ENCODE measurements at regions of chr5 and their contacts with region 1.

Region 1: DNA sequence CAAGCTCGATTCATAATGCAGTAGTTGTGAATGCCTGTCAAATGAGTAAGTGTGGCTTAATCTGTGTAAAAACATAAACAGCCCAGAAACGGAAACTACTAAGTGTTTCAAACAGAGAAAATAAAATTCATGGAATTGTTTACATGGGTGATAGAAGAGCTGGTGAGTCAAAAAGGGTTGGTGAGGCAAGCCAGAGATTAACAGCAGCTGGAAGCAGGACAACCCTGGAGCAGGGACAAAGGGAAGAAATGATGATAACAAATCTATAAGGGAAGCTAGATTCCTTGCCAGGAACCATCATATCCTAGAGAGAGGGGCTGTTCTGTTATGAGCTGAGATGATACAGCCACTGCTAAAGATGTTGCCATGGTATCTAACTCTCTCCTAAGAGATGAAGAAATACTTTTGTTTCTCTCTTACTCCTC is 18.0 kb upstream of the PRR16 start:
- DNase-seq: no peak
- H3K4me3 ChIP-seq: no peak overlapping the region
- H3K27ac ChIP-seq: peak overlapping the region; percentile 48 to 74
- H3K4me1 ChIP-seq: peaks cover 4 to 10% of the 10 kb centered on the region in 2 donors
- H3K27me3 ChIP-seq: no peaks in the 10 kb centered on the region
- CTCF ChIP-seq: no peak

Region 2: GRCh38 chr5:120388016-120388781 is 57.9 kb before region 1 on chr5:
- intact Hi-C with region 1: loop called (anchors 5 kb)
- DNase-seq: no peak
- H3K4me3 ChIP-seq: no peak overlapping the region
- H3K27ac ChIP-seq: peak overlapping the region; percentile 68 to 82
- H3K4me1 ChIP-seq: peaks cover 3 to 12% of the 10 kb centered on the region in 2 donors
- H3K27me3 ChIP-seq: no peaks in the 10 kb centered on the region
- CTCF ChIP-seq: no peak

Measured in ascending aorta (tissue), 2 donors.